Endothelial cell of umbilical vein (primary cell): ENCODE measurements at regions of chr3 and their contacts with region 1.

Region 1: DNA sequence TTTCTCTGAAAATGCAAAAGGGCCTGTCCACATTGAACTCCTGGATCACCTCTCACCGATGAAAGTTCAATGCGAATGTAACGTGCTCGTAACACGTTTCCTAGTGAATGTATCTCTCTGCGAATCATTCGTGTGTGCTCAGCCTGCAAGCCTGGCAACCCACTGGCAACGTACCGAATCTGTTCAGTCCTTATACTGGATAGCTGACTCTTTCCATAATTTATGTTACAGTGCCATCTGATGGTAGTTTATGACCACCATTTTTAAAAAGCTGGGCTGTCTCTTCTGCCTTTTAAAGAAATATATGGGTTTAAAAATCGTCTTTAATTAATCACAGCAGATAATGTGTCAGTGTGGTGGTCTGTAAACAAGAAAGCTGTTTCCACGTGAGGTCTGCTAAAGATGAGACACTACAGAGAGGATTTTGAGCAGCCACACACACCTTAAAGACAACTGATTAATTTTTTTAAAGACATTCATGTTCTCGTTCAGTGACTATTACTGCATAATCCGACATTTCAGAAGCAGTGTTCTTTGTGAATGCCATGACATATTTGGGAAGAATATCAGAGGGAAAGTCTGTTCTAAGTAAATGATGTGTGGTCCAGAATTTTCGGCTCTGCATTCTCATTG is 69.4 kb upstream of the FOXP1 start:
- DNase-seq: peak; percentile 78
- H3K4me3 ChIP-seq: no peak overlapping the region
- H3K27ac ChIP-seq: no peak overlapping the region
- H3K4me1 ChIP-seq: peaks cover 9% of the 10 kb centered on the region
- H3K27me3 ChIP-seq: no peaks in the 10 kb centered on the region
- CTCF ChIP-seq: peak; percentile 17 to 42
- POLR2A ChIP-seq: no peak

Region 2: DNA sequence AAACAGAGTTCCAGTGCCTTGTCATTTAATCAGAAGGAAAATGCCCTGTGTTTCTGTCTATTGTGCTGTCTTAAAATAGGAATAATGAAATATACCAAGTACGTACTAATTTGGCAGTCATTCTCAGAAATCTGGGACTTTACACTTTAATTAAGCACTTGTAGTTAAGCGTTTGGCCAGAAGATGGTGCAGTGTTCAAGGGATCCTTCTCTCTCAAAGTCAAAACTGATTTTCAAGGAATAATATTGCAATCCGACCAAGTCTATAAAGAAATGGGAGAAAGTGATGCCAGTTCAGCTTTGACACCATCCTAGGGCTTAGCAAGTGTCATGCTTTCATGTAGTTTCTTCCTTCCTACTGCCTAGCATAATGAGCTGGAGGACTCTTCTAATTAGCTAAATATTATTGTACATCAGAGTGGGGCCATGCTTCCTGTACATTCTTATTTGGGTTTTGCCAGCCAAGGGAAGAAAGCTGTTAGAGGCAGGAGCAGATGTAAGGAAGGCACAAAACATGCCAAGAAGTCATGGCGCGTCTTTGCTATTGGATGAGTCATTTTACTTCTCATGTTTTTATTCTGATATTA is 1588.6 kb before region 1 on chr3:
- CTCF ChIA-PET with region 1: interaction called, 26 read pairs
- POLR2A ChIA-PET with region 1: no interaction called
- dilution Hi-C with region 1: no loop called
- intact Hi-C with region 1: loop called (anchors 1 kb)
- DNase-seq: peak; percentile 71
- H3K4me3 ChIP-seq: no peak overlapping the region
- H3K27ac ChIP-seq: no peak overlapping the region
- H3K4me1 ChIP-seq: no peaks in the 10 kb centered on the region
- H3K27me3 ChIP-seq: peaks cover 10 to 12% of the 10 kb centered on the region in 2 experiments
- CTCF ChIP-seq: peak; percentile 51 to 52
- POLR2A ChIP-seq: no peak

Region 3: DNA sequence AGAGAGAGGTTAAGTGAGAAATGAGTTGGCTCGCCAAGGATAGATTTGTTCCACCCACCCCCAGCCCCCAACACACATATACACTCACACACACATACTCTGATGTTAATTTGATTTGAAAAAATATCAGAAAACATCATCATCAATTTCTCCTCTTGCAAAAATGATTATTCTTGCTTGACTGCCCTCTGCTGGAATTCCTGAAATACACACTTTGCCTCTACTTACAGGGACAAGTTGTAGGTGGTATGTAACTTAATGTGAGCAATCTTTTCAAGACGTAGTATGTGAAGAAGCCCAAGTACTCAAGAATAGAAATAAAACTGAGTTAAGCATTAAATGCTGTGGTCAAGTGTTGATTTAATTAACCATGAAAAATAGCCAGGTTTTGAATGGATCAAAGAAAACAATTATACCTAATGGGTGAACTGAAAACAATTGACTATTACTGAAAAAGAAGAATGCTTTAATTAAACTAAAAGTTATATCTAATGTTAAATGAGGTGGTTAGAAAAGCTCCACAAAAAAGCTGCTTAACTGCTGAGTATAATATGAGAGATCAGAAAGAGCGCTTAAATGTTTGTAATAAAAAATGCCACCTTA is 1293.8 kb before region 1 on chr3:
- CTCF ChIA-PET with region 1: no interaction called
- POLR2A ChIA-PET with region 1: no interaction called
- dilution Hi-C with region 1: no loop called
- intact Hi-C with region 1: loop called (anchors 5 kb)
- DNase-seq: peak; percentile 72
- H3K4me3 ChIP-seq: no peak overlapping the region
- H3K27ac ChIP-seq: no peak overlapping the region
- H3K4me1 ChIP-seq: no peaks in the 10 kb centered on the region
- H3K27me3 ChIP-seq: no peaks in the 10 kb centered on the region
- CTCF ChIP-seq: peak; percentile 40 to 59
- POLR2A ChIP-seq: no peak

Region 4: GRCh38 chr3:70531063-70531657 is 1121.7 kb before region 1 on chr3:
- CTCF ChIA-PET with region 1: interaction called, 43 read pairs
- POLR2A ChIA-PET with region 1: no interaction called
- dilution Hi-C with region 1: no loop called
- intact Hi-C with region 1: loop called (anchors 1 kb)
- DNase-seq: peak; percentile 52
- H3K4me3 ChIP-seq: no peak overlapping the region
- H3K27ac ChIP-seq: no peak overlapping the region
- H3K4me1 ChIP-seq: no peaks in the 10 kb centered on the region
- H3K27me3 ChIP-seq: peaks cover 7 to 9% of the 10 kb centered on the region in 2 experiments
- CTCF ChIP-seq: peak; percentile 7 to 28
- POLR2A ChIP-seq: no peak

Region 5: DNA sequence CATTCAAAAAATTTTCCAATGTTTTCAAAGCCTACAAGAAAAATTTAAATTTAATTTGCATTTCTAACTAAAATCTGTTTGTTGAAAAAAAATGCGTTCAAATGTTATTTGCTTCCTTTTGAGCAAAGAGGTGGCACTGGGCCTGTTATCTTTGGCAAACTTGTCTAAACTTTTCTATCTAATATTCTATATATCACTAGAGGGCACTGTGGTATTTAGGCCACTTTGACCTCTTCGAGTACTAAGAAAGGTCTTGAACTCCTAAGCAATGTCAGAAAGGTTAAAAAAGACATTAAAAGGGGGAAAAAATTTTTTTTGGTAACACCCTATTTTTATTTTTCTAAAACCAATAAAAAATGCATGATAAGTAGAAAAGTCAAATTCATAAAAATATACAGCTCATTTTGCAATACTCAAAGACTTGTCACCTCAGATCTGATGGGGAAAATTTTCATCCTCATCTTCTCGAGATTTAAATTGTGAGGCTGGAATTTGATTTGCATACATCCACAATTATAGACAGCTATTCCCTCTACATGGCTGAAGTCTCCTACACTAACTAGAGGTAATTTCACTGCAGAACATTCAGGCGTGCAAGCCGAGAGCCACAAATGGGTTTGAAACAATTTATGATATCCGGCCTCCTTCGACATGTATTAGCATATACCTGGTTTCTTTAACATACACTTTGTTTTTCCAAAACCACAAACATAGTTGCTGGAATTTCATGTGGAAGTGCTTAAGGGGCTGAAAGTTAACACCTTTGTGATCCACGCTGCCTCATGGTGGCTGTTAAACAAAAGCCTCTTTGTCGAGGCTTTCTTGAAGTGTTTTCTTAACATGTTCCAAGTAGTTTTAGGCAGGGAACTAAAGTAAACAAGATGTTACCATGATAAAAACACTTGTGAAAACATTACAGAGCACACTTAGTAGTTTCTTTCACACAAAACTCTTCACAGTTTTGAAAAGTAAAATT is 645.8 kb before region 1 on chr3:
- CTCF ChIA-PET with region 1: interaction called, 9 read pairs
- POLR2A ChIA-PET with region 1: no interaction called
- dilution Hi-C with region 1: no loop called
- intact Hi-C with region 1: loop called (anchors 2 kb)
- DNase-seq: peak; percentile 75
- H3K4me3 ChIP-seq: no peak overlapping the region
- H3K27ac ChIP-seq: peak overlapping the region; percentile 53
- H3K4me1 ChIP-seq: peaks cover 54% of the 10 kb centered on the region
- H3K27me3 ChIP-seq: no peaks in the 10 kb centered on the region
- CTCF ChIP-seq: peak in 1 of 2 donors; percentile 15
- POLR2A ChIP-seq: no peak

Region 6: DNA sequence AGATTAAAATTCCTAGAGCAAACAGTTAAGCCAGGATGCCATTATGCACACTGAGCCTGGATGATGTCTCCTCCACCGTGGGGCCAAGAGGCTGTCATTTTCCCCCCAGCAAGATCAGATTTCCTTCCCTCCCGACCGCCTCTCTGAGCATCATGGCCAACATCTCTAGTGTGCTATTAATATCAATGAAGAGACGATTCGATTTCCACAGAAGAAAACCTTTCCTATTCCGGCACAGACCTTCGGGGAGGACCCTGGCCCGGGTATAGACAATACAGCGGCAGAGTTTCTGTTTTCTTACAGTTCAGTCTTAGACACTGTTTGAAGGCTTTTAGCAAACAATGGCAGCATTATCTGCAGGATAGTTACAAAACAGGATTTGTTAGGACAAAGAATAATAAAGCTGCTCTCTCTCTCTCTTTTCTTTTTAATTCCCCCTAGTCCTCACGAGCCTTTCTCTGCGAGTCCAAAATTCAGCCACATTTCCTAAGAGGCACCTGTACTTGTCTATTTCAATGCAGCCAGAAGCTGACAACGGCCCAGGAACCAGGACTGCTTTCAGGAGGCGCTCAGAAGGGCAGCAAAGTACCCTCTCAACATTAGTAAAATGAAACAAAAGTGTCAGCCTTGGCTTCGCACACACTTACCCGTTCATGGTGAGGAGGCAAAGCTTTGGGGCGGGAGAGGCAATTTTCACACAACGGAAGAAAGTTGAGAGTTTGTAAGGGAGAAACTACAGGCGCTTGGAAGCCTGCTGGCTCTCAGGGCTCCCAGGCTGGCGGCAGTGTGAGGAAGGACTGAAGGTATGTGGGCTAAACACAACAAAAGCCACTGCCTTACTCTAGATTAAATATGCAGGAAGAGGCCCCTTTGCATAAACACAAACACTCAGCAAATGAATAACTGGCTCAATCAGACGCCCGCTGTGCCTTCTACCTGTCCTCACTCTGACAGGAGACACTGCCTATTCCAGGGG is 347.4 kb before region 1 on chr3:
- CTCF ChIA-PET with region 1: interaction called, 3 read pairs
- POLR2A ChIA-PET with region 1: no interaction called
- dilution Hi-C with region 1: no loop called
- intact Hi-C with region 1: loop called (anchors 2 kb)
- DNase-seq: peak; percentile 71
- H3K4me3 ChIP-seq: peak overlapping the region; percentile 24 to 60 (median 41)
- H3K27ac ChIP-seq: peak overlapping the region; percentile 19
- H3K4me1 ChIP-seq: peaks cover 24% of the 10 kb centered on the region
- H3K27me3 ChIP-seq: no peaks in the 10 kb centered on the region
- CTCF ChIP-seq: no peak
- POLR2A ChIP-seq: no peak

Region 7: GRCh38 chr3:71554649-71555048 is 98.2 kb before region 1 on chr3:
- CTCF ChIA-PET with region 1: no interaction called
- POLR2A ChIA-PET with region 1: no interaction called
- dilution Hi-C with region 1: no loop called
- intact Hi-C with region 1: no loop called
- DNase-seq: no peak
- H3K4me3 ChIP-seq: no peak overlapping the region
- H3K27ac ChIP-seq: no peak overlapping the region
- H3K4me1 ChIP-seq: peaks cover 17% of the 10 kb centered on the region
- H3K27me3 ChIP-seq: no peaks in the 10 kb centered on the region
- CTCF ChIP-seq: no peak
- POLR2A ChIP-seq: no peak

Region 8: GRCh38 chr3:71681224-71681668 is 28.3 kb after region 1 on chr3:
- CTCF ChIA-PET with region 1: interaction called, 28 read pairs
- POLR2A ChIA-PET with region 1: no interaction called
- dilution Hi-C with region 1: no loop called
- intact Hi-C with region 1: no loop called
- DNase-seq: peak; percentile 73
- H3K4me3 ChIP-seq: no peak overlapping the region
- H3K27ac ChIP-seq: no peak overlapping the region
- H3K4me1 ChIP-seq: peaks cover 5% of the 10 kb centered on the region
- H3K27me3 ChIP-seq: no peaks in the 10 kb centered on the region
- CTCF ChIP-seq: peak; percentile 75 to 80
- POLR2A ChIP-seq: no peak